MCF 10A (cell line): ENCODE measurements at regions of chr1 and their contacts with region 1.

Region 1: DNA sequence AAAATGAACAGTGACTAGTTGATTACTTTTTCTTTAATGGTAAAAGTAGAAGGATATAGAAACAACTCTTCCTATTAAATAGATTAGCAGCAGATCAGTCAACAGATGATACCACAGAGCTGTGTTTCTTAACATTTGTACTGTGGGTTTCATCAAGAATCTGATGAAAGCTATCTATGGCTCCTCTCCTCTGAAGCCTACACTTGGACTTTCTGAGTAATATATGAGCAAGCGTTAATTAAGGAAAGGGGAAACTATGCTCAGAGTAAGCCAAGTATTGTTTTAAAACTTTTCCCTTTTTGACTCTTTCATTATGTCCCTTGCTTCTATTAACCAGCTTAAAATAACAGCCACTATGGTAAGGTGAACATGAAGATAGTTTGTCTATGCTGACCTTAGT is 10.8 kb downstream of the ARID4B start:
- DNase-seq: no peak
- H3K4me3 Mint-ChIP-seq: no peak overlapping the region
- H3K27ac Mint-ChIP-seq: peak overlapping the region; percentile 17
- H3K4me1 Mint-ChIP-seq: peaks cover 46% of the 10 kb centered on the region
- H3K27me3 Mint-ChIP-seq: no peaks in the 10 kb centered on the region
- CTCF ChIP-seq: no peak

Region 2: GRCh38 chr1:235266325-235266724 is 50.8 kb before region 1 on chr1:
- CTCF ChIA-PET with region 1: interaction called, 3 read pairs
- POLR2A ChIA-PET with region 1: interaction called, 3 read pairs
- intact Hi-C with region 1: loop called (anchors 5 kb)
- DNase-seq: no peak
- H3K4me3 Mint-ChIP-seq: no peak overlapping the region
- H3K27ac Mint-ChIP-seq: no peak overlapping the region
- H3K4me1 Mint-ChIP-seq: peaks cover 33% of the 10 kb centered on the region
- H3K27me3 Mint-ChIP-seq: no peaks in the 10 kb centered on the region
- CTCF ChIP-seq: no peak

Region 3: DNA sequence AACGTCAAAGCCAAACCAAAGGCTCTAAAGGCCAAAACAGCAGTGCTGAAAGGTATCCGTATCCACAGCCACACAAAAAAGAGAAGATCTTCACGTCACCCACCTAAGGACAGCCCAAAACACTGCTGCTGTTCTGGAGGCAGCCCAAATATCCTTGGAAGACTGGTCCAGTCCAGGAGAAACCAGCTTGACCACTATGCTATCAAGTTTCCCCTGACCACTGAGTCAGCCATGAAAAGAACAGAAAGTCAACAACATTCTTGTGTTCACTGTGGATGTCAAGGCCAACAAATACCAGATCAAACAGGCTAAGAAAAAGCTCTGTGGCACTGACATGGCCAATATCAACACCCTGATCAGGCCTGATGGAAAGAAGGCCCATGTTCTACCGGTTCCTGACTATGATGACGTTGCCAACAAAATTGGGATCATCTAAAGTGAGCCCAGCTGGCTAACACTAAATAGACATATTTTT is 21.2 kb before region 1 on chr1:
- CTCF ChIA-PET with region 1: interaction called, 8 read pairs
- POLR2A ChIA-PET with region 1: interaction called, 11 read pairs
- intact Hi-C with region 1: no loop called
- DNase-seq: peak; percentile 20
- H3K4me3 Mint-ChIP-seq: no peak overlapping the region
- H3K27ac Mint-ChIP-seq: peak overlapping the region; percentile 2
- H3K4me1 Mint-ChIP-seq: peaks cover 24% of the 10 kb centered on the region
- H3K27me3 Mint-ChIP-seq: no peaks in the 10 kb centered on the region
- CTCF ChIP-seq: no peak

Region 4: GRCh38 chr1:235304549-235305451 is 12.4 kb before region 1 on chr1:
- CTCF ChIA-PET with region 1: interaction called, 8 read pairs
- POLR2A ChIA-PET with region 1: interaction called, 12 read pairs
- intact Hi-C with region 1: no loop called
- DNase-seq: no peak
- H3K4me3 Mint-ChIP-seq: no peak overlapping the region
- H3K27ac Mint-ChIP-seq: peak overlapping the region; percentile 28
- H3K4me1 Mint-ChIP-seq: peaks cover 21% of the 10 kb centered on the region
- H3K27me3 Mint-ChIP-seq: no peaks in the 10 kb centered on the region
- CTCF ChIP-seq: no peak